HEK293T (cell line): ENCODE measurements at regions of chr1 and their contacts with region 1.

Region 1: DNA sequence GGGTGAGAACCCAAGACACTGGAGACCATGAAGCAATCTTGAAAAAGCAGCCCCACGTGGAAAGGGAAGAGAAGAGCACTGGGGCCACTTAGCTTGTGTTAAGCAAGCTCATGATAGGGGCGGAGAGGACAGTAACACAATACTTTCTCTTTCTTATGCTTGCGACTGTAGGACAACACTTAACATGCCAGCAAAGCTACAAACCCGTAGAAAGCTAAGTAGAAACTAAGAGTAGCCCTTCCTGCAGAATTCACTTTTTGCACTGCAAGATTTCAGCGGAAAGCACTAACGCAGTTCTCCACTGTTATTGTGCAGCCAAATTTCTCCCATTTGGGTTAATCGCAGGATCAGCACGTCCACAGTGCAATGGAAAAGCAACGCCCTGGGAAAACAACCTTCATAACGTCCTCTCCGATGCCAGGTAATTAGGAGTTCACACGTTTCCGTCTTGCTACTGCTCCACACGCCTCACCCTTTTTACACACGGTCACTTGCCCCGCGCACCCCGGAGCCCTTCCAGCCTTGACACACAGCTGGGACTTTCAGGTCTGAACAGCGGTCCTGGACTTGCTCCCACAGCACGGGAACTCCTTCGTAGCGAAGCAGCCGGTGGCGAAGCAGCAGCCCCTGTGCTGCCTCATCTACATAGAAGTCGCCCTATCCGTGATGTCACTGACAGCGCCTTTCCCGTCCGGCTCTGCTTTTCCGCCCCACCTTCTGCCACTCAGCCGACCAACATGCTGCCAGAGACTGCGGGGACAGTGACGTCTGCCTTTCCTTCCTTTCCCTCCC is 148.6 kb downstream of the PPIAL4G start:
- DNase-seq: peak; percentile 78

Region 2: GRCh38 chr1:148263128-148263905 is 71.2 kb before region 1 on chr1:
- CTCF ChIA-PET with region 1: no interaction called
- POLR2A ChIA-PET with region 1: interaction called, 132 read pairs
- DNase-seq: peak; percentile 76

Region 3: GRCh38 chr1:148272901-148273300 is 61.6 kb before region 1 on chr1:
- CTCF ChIA-PET with region 1: no interaction called
- POLR2A ChIA-PET with region 1: interaction called, 15 read pairs
- DNase-seq: no peak

Region 4: DNA sequence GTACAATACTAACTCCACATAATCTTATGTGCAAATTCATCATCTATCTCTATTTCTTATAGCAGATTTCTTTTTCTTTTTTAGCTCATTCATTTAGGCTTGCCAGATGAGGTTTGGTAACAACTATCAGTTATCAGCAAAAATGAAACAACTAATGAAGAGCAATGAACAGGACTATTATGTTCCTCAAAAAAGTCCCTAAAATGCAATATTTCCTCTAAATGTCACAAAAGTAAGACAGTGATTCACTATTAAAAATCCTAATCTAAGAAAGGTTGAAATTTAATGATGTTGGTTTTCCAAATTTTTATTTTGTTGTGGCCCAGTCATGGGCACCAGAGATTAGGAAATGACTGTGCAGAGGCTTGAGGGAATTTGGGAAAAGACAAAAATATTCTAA is 13.2 kb after region 1 on chr1:
- CTCF ChIA-PET with region 1: interaction called, 7 read pairs
- POLR2A ChIA-PET with region 1: interaction called, 11 read pairs
- DNase-seq: no peak

Region 5: DNA sequence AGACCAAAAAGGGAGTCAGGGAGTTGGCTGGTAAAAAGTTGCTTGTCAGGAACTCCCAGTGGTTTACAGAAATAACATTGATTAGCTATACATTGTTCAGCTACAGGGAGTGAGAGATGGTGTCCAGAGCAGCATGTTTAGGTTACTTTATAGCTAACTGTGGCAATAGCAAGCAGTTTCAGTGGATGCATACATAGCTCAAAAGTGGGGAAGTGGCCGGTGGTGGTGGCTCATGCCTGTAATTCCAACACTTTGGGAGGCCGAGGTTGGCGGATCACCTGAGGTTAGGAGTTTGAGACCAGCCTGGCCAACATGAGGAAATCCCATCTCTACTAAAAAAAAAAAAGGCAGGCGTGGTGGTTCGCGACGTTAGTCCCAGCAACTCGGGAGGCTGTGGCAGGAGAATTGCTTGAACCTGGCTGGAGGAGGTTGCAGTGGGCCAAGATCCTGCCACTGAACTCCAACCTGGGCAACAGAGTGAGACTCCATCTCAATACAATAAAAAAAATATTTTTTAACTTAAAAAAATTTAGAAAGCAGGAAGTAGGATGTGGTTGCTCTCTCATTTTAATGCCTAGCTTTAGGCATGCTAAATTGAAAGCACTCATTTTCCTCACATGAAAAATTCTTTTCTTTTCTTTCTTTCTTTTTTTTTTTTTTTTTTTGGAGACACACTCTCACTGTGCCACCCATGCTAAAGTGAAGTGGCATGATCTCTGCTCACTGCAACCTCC is 38.8 kb after region 1 on chr1:
- CTCF ChIA-PET with region 1: no interaction called
- POLR2A ChIA-PET with region 1: no interaction called
- DNase-seq: no peak

Region 6: DNA sequence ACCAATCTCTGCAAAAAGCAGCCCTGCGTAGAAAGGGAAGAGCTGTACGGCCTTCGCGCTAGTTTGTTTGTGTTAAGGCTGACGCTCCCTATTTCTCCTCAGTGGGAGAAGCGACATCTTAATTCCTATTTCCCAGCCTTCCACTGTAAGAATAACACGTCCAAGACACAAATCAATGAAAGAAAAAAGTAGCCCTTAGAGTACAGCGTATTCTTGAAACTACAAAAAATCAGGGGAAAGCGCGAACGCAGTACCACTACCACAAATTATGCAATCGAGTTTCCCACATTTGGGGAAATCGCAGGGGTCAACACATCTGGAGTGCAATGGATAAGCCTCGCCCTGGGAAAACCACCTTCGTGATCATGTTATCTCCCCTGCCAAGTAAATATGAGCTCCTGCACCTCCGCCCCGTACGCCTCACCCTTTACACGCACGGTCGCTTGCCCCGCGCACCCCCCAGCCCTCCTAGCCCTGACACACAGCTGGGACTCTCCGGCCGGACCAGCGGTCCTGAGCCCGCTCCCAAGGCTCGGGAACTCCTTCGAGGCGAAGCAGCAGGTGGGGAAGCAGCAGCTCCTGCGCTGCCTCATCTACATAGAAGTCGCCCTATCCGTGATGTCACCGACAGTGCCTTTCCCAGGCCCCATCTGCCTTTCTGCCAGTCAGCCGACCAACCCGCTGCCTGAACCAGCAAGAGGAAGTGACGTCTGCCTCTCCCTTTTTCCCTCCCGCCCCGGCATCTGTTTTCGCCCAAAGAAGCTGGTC is 53.9 kb after region 1 on chr1:
- CTCF ChIA-PET with region 1: no interaction called
- POLR2A ChIA-PET with region 1: interaction called, 12 read pairs
- DNase-seq: peak; percentile 93